Activated T-helper 2 cell treated with anti-CD3 and anti-CD28 coated beads, Interferon-gamma antibody, Interleukin-2, Interleukin-4, amounts not matched to agents 10 μg/mL and 5 μg/mL and 100 μg/mL, durations not matched to agents 14 hours and 24 hours and 36 hours (primary cell): ENCODE measurements at regions of chr6 and their contacts with region 1.

Region 1: GRCh38 chr6:12233693-12234571 is 56.2 kb upstream of the EDN1 start:
- DNase-seq: peak; percentile 27
- H3K4me3 Mint-ChIP-seq: no peak overlapping the region
- H3K27ac Mint-ChIP-seq: peak overlapping the region; percentile 9
- H3K4me1 Mint-ChIP-seq: peaks cover 44% of the 10 kb centered on the region
- H3K27me3 Mint-ChIP-seq: no peaks in the 10 kb centered on the region

Region 2: DNA sequence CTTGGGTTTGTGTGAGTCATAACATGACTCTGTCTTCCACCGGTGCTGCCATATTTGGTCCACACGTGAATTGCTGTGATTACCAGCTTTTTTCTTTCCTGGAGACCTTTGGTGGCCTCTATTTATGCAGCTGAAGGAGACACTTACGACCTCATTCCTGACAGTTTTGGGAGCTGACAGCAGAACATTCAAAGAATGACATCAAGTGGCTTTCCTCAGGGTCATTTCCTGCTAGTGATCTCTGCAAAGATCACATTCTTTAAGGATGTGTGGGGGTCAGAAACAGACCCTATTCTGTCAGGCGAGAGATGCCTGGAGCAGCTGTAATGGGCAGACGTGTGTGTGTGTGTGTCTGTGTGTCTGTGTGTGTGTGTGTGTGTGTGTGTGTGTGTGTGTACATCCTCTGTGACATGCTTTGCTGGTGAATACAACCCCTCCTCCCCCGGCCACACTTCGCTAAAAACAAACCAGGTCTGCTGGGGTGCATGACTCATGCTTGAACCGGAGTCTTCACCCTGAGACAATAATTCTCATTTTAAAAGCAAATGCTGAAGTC is 580.8 kb before region 1 on chr6:
- intact Hi-C with region 1: loop called (anchors 2 kb)
- DNase-seq: peak; percentile 31
- H3K4me3 Mint-ChIP-seq: no peak overlapping the region
- H3K27ac Mint-ChIP-seq: no peak overlapping the region
- H3K4me1 Mint-ChIP-seq: peaks cover 11% of the 10 kb centered on the region
- H3K27me3 Mint-ChIP-seq: peaks cover 16% of the 10 kb centered on the region

Region 3: GRCh38 chr6:12060780-12061619 is 172.9 kb before region 1 on chr6:
- intact Hi-C with region 1: loop called (anchors 5 kb)
- DNase-seq: peak; percentile 71
- H3K4me3 Mint-ChIP-seq: peak overlapping the region; percentile 80
- H3K27ac Mint-ChIP-seq: peak overlapping the region; percentile 88
- H3K4me1 Mint-ChIP-seq: peaks cover 71% of the 10 kb centered on the region
- H3K27me3 Mint-ChIP-seq: no peaks in the 10 kb centered on the region

Region 4: DNA sequence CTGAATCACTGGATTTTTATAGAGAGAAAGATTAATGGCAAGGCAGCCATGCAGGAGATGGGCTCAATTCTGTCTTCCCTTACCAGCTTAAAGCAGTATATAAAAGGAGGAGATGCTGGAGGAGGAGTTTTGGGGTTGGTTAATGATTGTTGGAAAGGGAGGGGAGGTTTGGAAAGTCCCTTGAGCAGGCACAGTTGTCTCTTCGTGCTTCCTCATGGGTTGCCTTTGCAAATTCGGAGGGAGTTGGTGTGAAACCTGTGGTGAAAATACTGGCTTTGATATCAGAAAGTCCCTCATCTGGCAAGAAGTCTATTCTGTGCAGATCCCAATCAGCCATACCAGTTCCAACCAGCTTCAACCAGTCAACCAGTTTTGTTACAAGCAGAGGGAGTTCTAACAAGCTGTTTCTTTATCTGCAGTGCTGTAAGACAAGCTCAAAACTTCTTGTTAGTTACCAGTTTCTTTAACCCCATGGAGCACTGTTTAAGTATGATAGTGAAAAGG is 114.8 kb before region 1 on chr6:
- intact Hi-C with region 1: loop called (anchors 10 kb)
- DNase-seq: peak; percentile 61
- H3K4me3 Mint-ChIP-seq: peak overlapping the region; percentile 11
- H3K27ac Mint-ChIP-seq: peak overlapping the region; percentile 75
- H3K4me1 Mint-ChIP-seq: peaks cover 47% of the 10 kb centered on the region
- H3K27me3 Mint-ChIP-seq: no peaks in the 10 kb centered on the region